OCI-LY7 (cell line): ENCODE measurements at regions of chr12 and their contacts with region 1.

Region 1: DNA sequence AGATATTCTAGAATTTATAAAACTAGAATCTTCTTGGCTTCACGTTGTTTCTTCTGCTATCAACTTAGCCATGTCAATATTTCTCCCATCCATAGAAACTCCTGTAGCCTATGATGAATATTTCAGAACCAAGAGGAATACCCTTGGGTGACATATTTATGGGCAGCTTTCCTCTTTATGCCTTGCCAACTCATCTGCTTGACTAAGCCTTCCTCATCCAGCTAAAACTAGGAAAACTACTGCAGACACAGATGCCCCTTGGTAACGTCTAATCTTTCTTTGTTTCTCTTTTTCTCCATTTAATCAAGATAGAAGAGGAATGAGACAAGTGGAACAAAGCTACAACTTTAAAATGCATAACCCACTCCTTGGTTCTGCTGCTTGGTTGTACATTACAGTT is 6.3 kb downstream of the GOLT1B start:
- DNase-seq: no peak
- H3K4me3 ChIP-seq: no peak overlapping the region
- H3K27ac ChIP-seq: no peak overlapping the region
- H3K4me1 ChIP-seq: peaks cover 10% of the 10 kb centered on the region
- CTCF ChIP-seq: no peak

Region 2: GRCh38 chr12:21527451-21528180 is 19.8 kb after region 1 on chr12:
- CTCF ChIA-PET with region 1: no interaction called
- POLR2A ChIA-PET with region 1: interaction called, 10 read pairs
- intact Hi-C with region 1: no loop called
- DNase-seq: peak; percentile 83
- H3K4me3 ChIP-seq: peak overlapping the region; percentile 65
- H3K27ac ChIP-seq: no peak overlapping the region
- H3K4me1 ChIP-seq: peaks cover 24% of the 10 kb centered on the region
- CTCF ChIP-seq: no peak

Region 3: DNA sequence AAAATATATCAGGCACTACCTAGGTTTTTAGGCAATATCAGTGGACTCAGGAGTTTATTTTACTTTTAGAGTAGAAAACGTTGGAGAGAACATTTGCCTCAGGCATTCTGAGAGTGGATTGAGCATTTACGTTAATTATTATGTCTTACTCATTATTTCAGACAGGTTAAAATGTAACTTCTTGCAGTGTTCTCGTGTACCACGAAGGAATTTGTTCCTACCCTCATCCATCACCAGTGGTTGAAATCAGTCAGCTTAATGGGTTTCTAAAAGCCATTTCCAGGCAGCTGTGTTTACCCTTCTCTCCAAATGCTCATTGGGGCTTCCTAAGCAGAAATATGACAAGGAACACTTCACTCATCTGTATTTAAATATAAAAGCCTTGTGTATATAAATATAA is 158.9 kb after region 1 on chr12:
- CTCF ChIA-PET with region 1: no interaction called
- POLR2A ChIA-PET with region 1: no interaction called
- intact Hi-C with region 1: no loop called
- DNase-seq: no peak
- H3K4me3 ChIP-seq: no peak overlapping the region
- H3K27ac ChIP-seq: no peak overlapping the region
- H3K4me1 ChIP-seq: no peaks in the 10 kb centered on the region
- CTCF ChIP-seq: no peak

Region 4: DNA sequence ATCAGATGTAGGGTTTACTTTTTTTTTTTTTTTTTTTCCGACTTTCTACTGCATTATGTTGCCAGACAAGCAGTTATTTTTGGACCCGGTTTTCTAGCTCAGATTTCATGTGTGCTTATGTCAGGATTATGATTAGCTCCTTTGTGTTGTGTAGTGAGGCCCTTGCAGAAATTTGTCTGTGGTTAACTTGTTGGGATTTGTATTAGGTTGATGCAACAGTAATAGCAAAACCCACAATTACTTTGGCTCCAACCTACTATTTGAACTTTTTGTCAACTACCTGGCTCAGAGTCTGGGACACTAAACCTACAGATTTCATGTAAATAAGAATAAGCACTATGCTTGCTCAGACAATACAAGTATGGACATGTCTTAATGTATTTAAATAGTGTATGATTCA is 310.8 kb after region 1 on chr12:
- CTCF ChIA-PET with region 1: no interaction called
- POLR2A ChIA-PET with region 1: no interaction called
- intact Hi-C with region 1: no loop called
- DNase-seq: no peak
- H3K4me3 ChIP-seq: no peak overlapping the region
- H3K27ac ChIP-seq: no peak overlapping the region
- H3K4me1 ChIP-seq: no peaks in the 10 kb centered on the region
- CTCF ChIP-seq: no peak